K562 (cell line): ENCODE measurements at regions of chr1 and their contacts with region 1.

Region 1: DNA sequence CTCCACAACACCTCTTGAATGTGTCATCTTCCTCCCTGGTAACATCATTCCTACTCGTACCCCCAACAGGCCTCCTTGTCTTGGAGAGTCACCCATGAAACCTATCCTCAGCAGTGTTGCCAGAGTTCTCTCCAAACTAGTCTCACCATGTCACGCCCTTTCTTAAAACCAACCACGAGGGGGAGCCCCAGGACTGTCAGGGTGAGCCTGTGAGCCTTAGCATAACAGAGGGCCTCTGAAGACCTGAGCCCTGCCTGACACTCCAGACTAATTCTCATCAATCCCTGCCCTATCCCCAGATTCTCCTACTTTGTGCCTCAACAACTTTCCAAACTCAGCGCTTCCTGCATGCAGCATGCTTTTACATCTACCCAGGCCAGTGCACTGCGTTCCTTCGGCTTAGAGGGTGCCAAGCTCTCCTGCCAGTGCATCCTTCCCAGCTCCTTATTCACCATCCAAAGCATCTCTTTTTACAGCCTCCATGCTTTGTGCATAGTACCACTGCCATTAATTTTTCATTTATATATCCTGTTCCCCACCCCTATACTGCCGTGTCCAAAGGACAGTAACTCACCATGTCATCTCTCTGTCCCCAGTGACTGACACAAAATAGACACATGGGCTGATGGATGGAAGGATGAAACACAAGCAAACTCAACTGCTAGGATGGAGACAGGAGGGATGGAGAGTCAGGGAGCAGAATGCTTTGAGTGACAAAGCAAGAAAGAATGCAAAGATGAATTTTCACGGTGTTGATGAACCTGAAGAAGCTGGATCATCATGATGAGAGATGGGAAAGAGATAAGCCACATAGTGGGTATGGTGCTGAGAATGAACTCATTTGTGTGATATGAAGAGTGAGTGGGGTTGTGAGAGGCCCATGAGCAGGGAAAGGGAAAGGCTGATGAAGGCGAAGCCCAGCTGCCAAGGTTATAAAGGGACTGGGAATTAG is 34.0 kb downstream of the ZNF697 start:
- DNase-seq: peak; percentile 72 to 91 (median 74)
- ATAC-seq: peak; percentile 96
- H3K4me3 ChIP-seq: no peak overlapping the region
- H3K27ac ChIP-seq: no peak overlapping the region
- H3K4me1 ChIP-seq: no peaks in the 10 kb centered on the region; a peak in 1 of 5 replicates
- H3K27me3 ChIP-seq: peaks cover 2 to 5% of the 10 kb centered on the region in 2 experiments; a peak in 1 of 5 replicates
- CTCF ChIP-seq: peak; percentile 82 to 92 (median 91)
- EP300 ChIP-seq: no peak
- POLR2A ChIP-seq: no peak
- RAD21 ChIP-seq: peak; percentile 98 to 99

Region 2: DNA sequence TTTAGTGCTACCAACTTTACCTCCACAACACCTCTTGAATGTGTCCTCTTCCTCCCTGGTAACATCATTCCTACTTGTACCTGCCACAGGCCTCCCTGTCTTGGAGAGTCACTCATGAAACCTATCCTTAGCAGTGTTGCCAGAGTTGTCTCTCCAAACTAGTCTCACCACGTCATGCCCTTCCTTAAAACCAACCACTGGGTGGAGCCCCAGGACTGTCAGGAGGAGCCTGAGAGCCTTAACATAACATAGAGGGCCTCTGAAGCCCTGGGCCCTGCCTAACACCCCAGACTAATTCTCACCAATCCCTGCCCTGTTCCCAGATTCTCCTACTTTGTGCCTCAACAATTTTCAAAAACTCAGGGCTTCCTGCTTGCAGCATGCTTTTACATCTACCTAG is 31.2 kb before region 1 on chr1:
- CTCF ChIA-PET with region 1: no interaction called
- POLR2A ChIA-PET with region 1: no interaction called
- in situ Hi-C with region 1: no loop called
- intact Hi-C with region 1: loop called (anchors 2 kb)
- DNase-seq: peak; percentile 25 to 66 (median 36)
- ATAC-seq: peak; percentile 98
- H3K4me3 ChIP-seq: no peak overlapping the region
- H3K27ac ChIP-seq: no peak overlapping the region
- H3K4me1 ChIP-seq: no peaks in the 10 kb centered on the region
- H3K27me3 ChIP-seq: no peaks in the 10 kb centered on the region; a peak in 1 of 5 replicates
- CTCF ChIP-seq: peak; percentile 57 to 71 (median 66)
- EP300 ChIP-seq: no peak
- POLR2A ChIP-seq: no peak
- RAD21 ChIP-seq: peak; percentile 66 to 79

Region 3: DNA sequence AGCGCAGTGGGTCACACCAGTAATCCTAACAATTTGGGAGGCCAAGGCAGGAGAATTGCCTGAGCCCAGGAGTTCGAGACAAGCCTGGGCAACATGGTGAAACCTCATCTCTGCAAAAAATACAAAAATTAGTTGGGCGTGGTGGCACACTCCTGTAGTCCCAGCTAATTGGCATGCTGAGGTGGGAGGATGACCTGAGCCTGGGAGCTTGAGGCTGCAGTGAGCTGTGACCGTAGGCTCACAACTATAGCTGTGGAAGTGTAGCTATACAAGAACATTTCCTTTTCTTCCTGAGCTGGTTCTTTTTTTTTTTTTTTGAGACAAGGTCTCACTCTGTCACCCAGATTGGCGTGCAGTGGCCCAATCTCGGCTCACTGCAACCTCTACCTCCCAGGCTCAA is 53.1 kb after region 1 on chr1:
- CTCF ChIA-PET with region 1: interaction called, 87 read pairs
- POLR2A ChIA-PET with region 1: no interaction called
- in situ Hi-C with region 1: loop called (anchors 5 kb)
- intact Hi-C with region 1: loop called (anchors 1 kb)
- DNase-seq: no peak
- ATAC-seq: no peak
- H3K4me3 ChIP-seq: no peak overlapping the region
- H3K27ac ChIP-seq: no peak overlapping the region
- H3K4me1 ChIP-seq: peaks cover 0 to 7% of the 10 kb centered on the region in 2 experiments; a peak in 3 of 5 replicates
- H3K27me3 ChIP-seq: no peaks in the 10 kb centered on the region; a peak in 2 of 5 replicates
- CTCF ChIP-seq: no peak
- EP300 ChIP-seq: no peak
- POLR2A ChIP-seq: no peak
- RAD21 ChIP-seq: no peak

Region 4: GRCh38 chr1:119743781-119744597 is 129.9 kb after region 1 on chr1:
- CTCF ChIA-PET with region 1: no interaction called
- POLR2A ChIA-PET with region 1: no interaction called
- in situ Hi-C with region 1: no loop called
- intact Hi-C with region 1: loop called (anchors 10 kb)
- DNase-seq: peak; percentile 82 to 90 (median 86)
- ATAC-seq: peak; percentile 90
- H3K4me3 ChIP-seq: no peak overlapping the region
- H3K27ac ChIP-seq: no peak overlapping the region
- H3K4me1 ChIP-seq: peaks cover 0 to 3% of the 10 kb centered on the region in 2 experiments; a peak in 3 of 5 replicates
- H3K27me3 ChIP-seq: peaks cover 12 to 21% of the 10 kb centered on the region in 2 experiments; a peak in 4 of 5 replicates
- CTCF ChIP-seq: peak; percentile 87 to 96 (median 92)
- EP300 ChIP-seq: no peak
- POLR2A ChIP-seq: no peak
- RAD21 ChIP-seq: peak; percentile 68 to 72